GM12878 (cell line): ENCODE measurements at regions of chr9 and their contacts with region 1.

Region 1: DNA sequence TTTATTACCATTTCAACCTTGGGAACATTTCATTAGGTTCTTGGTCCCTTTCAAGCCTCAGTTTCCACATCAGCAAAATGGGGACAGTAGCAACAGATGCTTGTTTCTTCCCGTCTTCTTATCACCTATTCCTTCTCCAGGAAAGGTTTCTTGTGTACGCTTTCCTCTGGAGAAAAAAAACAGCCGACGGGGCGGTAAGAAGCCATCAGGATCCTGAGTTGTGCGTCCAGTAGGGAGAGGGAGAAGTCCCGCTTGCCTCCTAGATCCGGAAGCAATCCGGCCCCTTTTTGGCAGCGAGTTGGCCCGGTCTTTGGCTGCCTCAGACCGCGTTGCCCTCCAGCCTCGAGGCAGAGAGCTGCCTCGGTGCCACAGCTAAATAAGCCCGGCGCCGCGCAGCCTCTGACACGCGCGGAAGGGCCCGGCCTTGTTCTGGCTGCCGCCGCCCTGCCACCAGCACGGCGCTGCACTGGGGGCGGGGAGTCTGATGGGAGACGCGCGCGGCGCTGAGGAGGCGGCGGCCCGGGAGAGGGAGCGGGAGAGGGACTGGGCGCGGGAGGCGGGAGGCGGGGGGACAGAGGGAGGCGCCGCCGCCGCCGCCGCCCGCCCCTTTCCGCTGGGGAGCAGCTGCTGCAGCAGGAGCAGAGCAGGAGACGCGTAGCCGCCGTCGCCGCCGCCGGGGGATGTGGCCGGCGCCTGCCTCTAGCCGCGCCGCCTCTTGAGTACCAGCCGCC is at the start of gene SLC44A1:
- DNase-seq: peak; percentile 47
- ATAC-seq: peak; percentile 88
- H3K4me3 ChIP-seq: peak within 1 kb of the TSS; percentile 87
- H3K27ac ChIP-seq: peak within 1 kb of the TSS; percentile 10; the same call in 1 of the 2 replicates
- H3K4me1 ChIP-seq: peaks cover 11% of the 10 kb centered on the region
- H3K27me3 ChIP-seq: no peaks in the 10 kb centered on the region
- CTCF ChIP-seq: no peak
- EP300 ChIP-seq: no peak
- POLR2A ChIP-seq: peak; percentile 87
- RAD21 ChIP-seq: peak; percentile 24; the same call in 1 of the 2 replicates
- polyA plus RNA-seq, gene SLC44A1: 5.0 to 5.2 TPM

Region 2: DNA sequence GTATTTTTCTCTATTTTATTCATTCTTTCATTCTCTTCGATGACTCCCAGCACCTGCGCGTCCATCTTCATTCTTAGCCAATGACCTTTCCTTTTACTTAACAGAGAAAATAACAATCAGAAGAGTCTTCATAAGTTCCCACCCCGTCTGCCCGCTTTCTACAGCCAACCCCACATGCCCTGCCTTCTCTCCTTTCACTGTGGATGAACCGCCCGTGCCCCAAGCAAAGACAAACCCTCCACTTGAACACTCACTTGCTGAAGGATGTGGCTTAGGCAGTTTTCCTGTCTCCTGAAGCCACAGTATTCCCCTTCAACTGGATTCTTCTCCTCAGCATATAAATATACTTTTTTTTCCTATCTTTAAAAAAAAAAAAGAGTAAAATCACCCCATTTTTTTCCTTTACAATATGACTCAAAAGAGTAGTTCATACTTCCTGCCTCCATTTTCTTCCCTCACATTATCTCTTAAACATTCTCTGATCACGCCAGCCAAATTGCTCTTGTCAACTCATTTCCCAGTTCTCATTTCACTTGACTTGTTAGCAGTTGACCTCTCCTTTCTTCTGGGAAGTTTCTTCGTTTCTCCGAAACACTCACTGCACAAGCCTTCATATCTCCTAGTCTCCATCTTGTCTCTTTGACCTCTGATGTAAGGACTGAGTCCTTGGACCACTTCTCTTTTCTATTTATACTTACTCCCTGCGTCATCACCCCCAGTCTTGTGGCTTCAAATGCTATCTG is 469.2 kb before region 1 on chr9:
- CTCF ChIA-PET with region 1: no interaction called
- POLR2A ChIA-PET with region 1: no interaction called
- RAD21 ChIA-PET with region 1: no interaction called
- SMC1A ChIA-PET with region 1: interaction called, 4 read pairs
- in situ Hi-C with region 1: no loop called
- intact Hi-C with region 1: loop called (anchors 10 kb)
- DNase-seq: peak; percentile 85
- ATAC-seq: peak; percentile 84
- H3K4me3 ChIP-seq: peak overlapping the region; percentile 63
- H3K27ac ChIP-seq: peak overlapping the region; percentile 98
- H3K4me1 ChIP-seq: peaks cover 17% of the 10 kb centered on the region
- H3K27me3 ChIP-seq: no peaks in the 10 kb centered on the region
- CTCF ChIP-seq: no peak
- EP300 ChIP-seq: peak; percentile 13 to 57; a peak in 2 of 4 replicates
- POLR2A ChIP-seq: peak; percentile 73
- RAD21 ChIP-seq: no peak

Region 3: GRCh38 chr9:105309531-105309931 is 65.4 kb after region 1 on chr9:
- CTCF ChIA-PET with region 1: no interaction called
- POLR2A ChIA-PET with region 1: interaction called, 3 read pairs
- RAD21 ChIA-PET with region 1: interaction called, 10 read pairs
- SMC1A ChIA-PET with region 1: interaction called, 4 read pairs
- in situ Hi-C with region 1: no loop called
- intact Hi-C with region 1: no loop called
- DNase-seq: no peak
- ATAC-seq: no peak
- H3K4me3 ChIP-seq: no peak overlapping the region
- H3K27ac ChIP-seq: no peak overlapping the region
- H3K4me1 ChIP-seq: peaks cover 11% of the 10 kb centered on the region
- H3K27me3 ChIP-seq: no peaks in the 10 kb centered on the region
- CTCF ChIP-seq: no peak
- EP300 ChIP-seq: no peak
- POLR2A ChIP-seq: no peak
- RAD21 ChIP-seq: no peak

Region 4: GRCh38 chr9:105355781-105356180 is 111.6 kb after region 1 on chr9:
- CTCF ChIA-PET with region 1: interaction called, 5 read pairs
- POLR2A ChIA-PET with region 1: no interaction called
- RAD21 ChIA-PET with region 1: interaction called, 3 read pairs
- SMC1A ChIA-PET with region 1: interaction called, 3 read pairs
- in situ Hi-C with region 1: no loop called
- intact Hi-C with region 1: loop called (anchors 5 kb)
- DNase-seq: peak; percentile 5
- ATAC-seq: peak; percentile 90
- H3K4me3 ChIP-seq: no peak overlapping the region
- H3K27ac ChIP-seq: no peak overlapping the region
- H3K4me1 ChIP-seq: peaks cover 10% of the 10 kb centered on the region
- H3K27me3 ChIP-seq: no peaks in the 10 kb centered on the region
- CTCF ChIP-seq: peak in 1 of 3 experiments; percentile 27; a peak in 1 of 6 replicates
- EP300 ChIP-seq: no peak
- POLR2A ChIP-seq: no peak
- RAD21 ChIP-seq: 0 out of 2 replicates have a peak, but pooled peaks have one; percentile 26

Region 5: GRCh38 chr9:105385381-105385985 is 141.3 kb after region 1 on chr9:
- CTCF ChIA-PET with region 1: no interaction called
- POLR2A ChIA-PET with region 1: no interaction called
- RAD21 ChIA-PET with region 1: interaction called, 6 read pairs
- SMC1A ChIA-PET with region 1: interaction called, 5 read pairs
- in situ Hi-C with region 1: no loop called
- intact Hi-C with region 1: loop called (anchors 5 kb)
- DNase-seq: peak; percentile 27
- ATAC-seq: peak; percentile 99
- H3K4me3 ChIP-seq: peak overlapping the region; percentile 41; the same call in 1 of the 2 replicates
- H3K27ac ChIP-seq: peak overlapping the region; percentile 52; the same call in 1 of the 2 replicates
- H3K4me1 ChIP-seq: peaks cover 5% of the 10 kb centered on the region
- H3K27me3 ChIP-seq: no peaks in the 10 kb centered on the region
- CTCF ChIP-seq: no peak
- EP300 ChIP-seq: peak in 1 of 2 experiments; percentile 48; a peak in 1 of 4 replicates
- POLR2A ChIP-seq: no peak
- RAD21 ChIP-seq: no peak

Region 6: DNA sequence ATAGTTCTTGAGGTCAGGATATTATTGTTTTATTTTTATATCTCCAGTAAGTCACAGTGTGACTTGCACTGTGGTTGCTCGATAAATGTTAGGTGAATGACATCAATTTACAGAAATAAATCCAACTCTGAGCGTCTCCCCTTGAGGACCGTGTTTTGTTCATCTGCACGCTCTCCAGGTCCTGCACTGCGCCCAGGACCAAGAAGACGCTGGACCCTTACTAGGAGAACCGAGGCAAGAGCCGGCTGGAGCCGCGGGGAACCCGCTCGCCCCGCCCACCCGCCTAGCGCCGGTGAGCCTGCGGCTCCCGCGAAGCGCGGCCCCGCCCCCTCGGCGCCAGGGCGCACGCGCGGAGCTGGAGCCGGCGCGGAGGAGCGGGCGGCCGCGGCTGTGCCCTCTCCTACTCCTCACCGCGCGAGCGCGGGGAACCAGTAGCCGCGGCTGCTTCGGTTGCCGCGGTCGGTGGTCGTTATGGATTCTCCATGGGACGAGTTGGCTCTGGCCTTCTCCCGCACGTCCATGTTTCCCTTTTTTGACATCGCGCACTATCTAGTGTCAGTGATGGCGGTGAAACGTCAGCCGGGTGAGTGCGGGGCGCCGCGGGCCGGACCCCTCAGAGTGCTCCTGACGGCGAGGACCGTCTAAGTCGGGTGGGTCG is 450.2 kb after region 1 on chr9 and contains the start of gene TMEM38B:
- CTCF ChIA-PET with region 1: no interaction called
- POLR2A ChIA-PET with region 1: no interaction called
- RAD21 ChIA-PET with region 1: no interaction called
- SMC1A ChIA-PET with region 1: no interaction called
- in situ Hi-C with region 1: no loop called
- intact Hi-C with region 1: loop called (anchors 10 kb)
- DNase-seq: no peak
- ATAC-seq: peak; percentile 88
- H3K4me3 ChIP-seq: peak within 1 kb of the TSS; percentile 78
- H3K27ac ChIP-seq: peak within 1 kb of the TSS; percentile 13
- H3K4me1 ChIP-seq: peaks cover 3% of the 10 kb centered on the region; the same call in 1 of the 2 replicates
- H3K27me3 ChIP-seq: 0 out of 4 replicates have a peak, but pooled peaks cover 0 to 3% of the 10 kb centered on the region in 2 experiments
- CTCF ChIP-seq: no peak
- EP300 ChIP-seq: no peak
- POLR2A ChIP-seq: peak; percentile 71
- RAD21 ChIP-seq: no peak
- polyA plus RNA-seq, gene TMEM38B: 9.9 to 15.4 TPM